ENCODE measurements at regions of chr10 and their contacts with region 1.

Region 1: GRCh38 chr10:78353636-78354035 is 320.0 kb downstream of the RPS24 start:
- DNase-seq: no peak
- ATAC-seq: no peak
- H3K4me3 ChIP-seq: no peak overlapping the region
- H3K27ac ChIP-seq: no peak overlapping the region
- H3K4me1 ChIP-seq: peaks cover 0 to 7% (median 0%) of the 10 kb centered on the region in 9 donors
- H3K27me3 ChIP-seq: peaks cover 0 to 4% (median 0%) of the 10 kb centered on the region in 7 donors
- CTCF ChIP-seq: no peak

Region 2: DNA sequence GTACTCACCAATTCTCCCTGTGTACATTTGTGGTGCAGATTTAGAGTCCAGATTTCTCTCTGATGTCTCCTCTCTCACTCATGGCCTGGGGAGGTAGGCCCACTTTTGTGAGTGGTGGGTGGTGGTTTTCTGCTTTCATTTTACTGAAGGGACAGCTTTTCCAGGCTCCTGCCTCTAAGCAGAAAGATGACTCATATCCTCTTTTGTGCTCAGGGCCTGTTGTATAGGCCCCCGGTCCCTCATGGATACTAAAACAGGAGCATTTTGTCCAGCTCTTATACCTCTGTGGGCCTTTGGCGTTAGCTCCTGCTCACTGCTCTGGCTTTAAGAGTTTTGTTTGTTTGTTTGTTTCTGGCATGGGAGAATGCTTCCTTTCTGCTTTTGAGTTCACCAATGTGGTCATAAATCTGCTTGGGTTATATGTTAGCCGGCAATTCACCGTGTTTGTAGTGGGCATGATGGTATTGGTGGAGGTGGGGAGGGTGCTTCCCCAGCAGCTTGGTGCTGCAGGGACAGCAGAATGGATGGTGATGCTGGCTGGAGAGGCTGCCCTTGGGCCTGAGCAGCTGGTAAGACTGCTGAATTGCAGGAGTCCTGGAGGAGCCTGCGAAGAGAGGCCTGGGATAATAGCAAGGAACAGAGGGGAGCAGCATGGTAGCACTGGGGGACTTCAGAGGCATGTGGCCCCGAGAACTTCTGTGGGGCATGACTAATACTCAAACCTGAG is 148.7 kb after region 1 on chr10:
- intact Hi-C with region 1: loop called in 1 of 10 experiments (anchors 1 kb)
- DNase-seq: no peak
- ATAC-seq: no peak
- H3K4me3 ChIP-seq: no peak overlapping the region
- H3K27ac ChIP-seq: no peak overlapping the region
- H3K4me1 ChIP-seq: peaks cover 0 to 9% (median 0%) of the 10 kb centered on the region in 9 donors
- H3K27me3 ChIP-seq: no peaks in the 10 kb centered on the region
- CTCF ChIP-seq: no peak